Ovary (tissue), 10 donors: ENCODE measurements at regions of chr12 and their contacts with region 1.

Region 1: GRCh38 chr12:79737875-79738718 is 47.3 kb upstream of the PAWR start:
- DNase-seq: peak in 2 of 5 donors; percentile 16 to 33
- H3K4me3 ChIP-seq: no peak overlapping the region
- H3K27ac ChIP-seq: no peak overlapping the region
- H3K4me1 ChIP-seq: no peaks in the 10 kb centered on the region
- H3K27me3 ChIP-seq: no peaks in the 10 kb centered on the region
- CTCF ChIP-seq: peak in 2 of 3 donors; percentile 56 to 59
- EP300 ChIP-seq: no peak
- POLR2A ChIP-seq: no peak

Region 2: GRCh38 chr12:79402606-79403005 is 335.5 kb before region 1 on chr12:
- intact Hi-C with region 1: loop called in 1 of 4 experiments (anchors 5 kb)
- DNase-seq: no peak
- H3K4me3 ChIP-seq: no peak overlapping the region
- H3K27ac ChIP-seq: no peak overlapping the region
- H3K4me1 ChIP-seq: no peaks in the 10 kb centered on the region
- H3K27me3 ChIP-seq: no peaks in the 10 kb centered on the region
- CTCF ChIP-seq: no peak
- EP300 ChIP-seq: no peak
- POLR2A ChIP-seq: no peak

Region 3: GRCh38 chr12:79698957-79699356 is 39.1 kb before region 1 on chr12:
- intact Hi-C with region 1: no loop called
- DNase-seq: no peak
- H3K4me3 ChIP-seq: no peak overlapping the region
- H3K27ac ChIP-seq: no peak overlapping the region
- H3K4me1 ChIP-seq: no peaks in the 10 kb centered on the region
- H3K27me3 ChIP-seq: no peaks in the 10 kb centered on the region
- CTCF ChIP-seq: no peak
- EP300 ChIP-seq: no peak
- POLR2A ChIP-seq: no peak

Region 4: DNA sequence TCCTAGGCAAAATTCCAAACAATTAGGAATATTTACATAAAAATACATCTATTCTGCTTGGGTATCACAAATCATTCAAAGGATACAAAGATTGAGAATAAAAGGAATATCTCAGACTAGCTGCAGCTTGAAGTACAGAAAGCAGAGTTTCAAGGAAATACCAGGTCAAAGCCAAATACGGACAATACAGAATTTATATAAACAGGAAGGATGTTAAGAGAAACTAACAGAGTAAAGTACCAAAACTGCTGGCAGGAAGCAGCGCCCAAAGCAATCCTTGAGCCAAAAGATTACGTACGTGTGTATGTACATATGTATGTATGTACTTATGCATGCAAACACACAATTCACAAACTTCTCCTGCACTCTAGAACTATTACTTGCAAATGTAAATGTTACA is 110.2 kb after region 1 on chr12:
- intact Hi-C with region 1: no loop called
- DNase-seq: no peak
- H3K4me3 ChIP-seq: no peak overlapping the region
- H3K27ac ChIP-seq: no peak overlapping the region
- H3K4me1 ChIP-seq: peaks cover 9% of the 10 kb centered on the region
- H3K27me3 ChIP-seq: no peaks in the 10 kb centered on the region
- CTCF ChIP-seq: no peak
- EP300 ChIP-seq: no peak
- POLR2A ChIP-seq: no peak

Region 5: GRCh38 chr12:80745851-80746505 is 1007.9 kb after region 1 on chr12:
- intact Hi-C with region 1: no loop called
- DNase-seq: no peak
- H3K4me3 ChIP-seq: no peak overlapping the region
- H3K27ac ChIP-seq: no peak overlapping the region
- H3K4me1 ChIP-seq: no peaks in the 10 kb centered on the region
- H3K27me3 ChIP-seq: no peaks in the 10 kb centered on the region
- CTCF ChIP-seq: no peak
- EP300 ChIP-seq: no peak
- POLR2A ChIP-seq: no peak